Heart left ventricle (tissue), 16 donors: ENCODE measurements at regions of chr11 and their contacts with region 1.

Region 1: GRCh38 chr11:47616726-47617416 is 22.7 kb upstream of the C1QTNF4 start:
- DNase-seq: peak in 4 of 5 donors; percentile 46 to 66 (median 62)
- ATAC-seq: peak; percentile 49 to 85 (median 82)
- H3K4me3 ChIP-seq: no peak overlapping the region
- H3K27ac ChIP-seq: peak overlapping the region in 1 of 12 donors; percentile 4
- H3K4me1 ChIP-seq: peaks cover 0 to 12% (median 3%) of the 10 kb centered on the region in 12 donors
- H3K27me3 ChIP-seq: no peaks in the 10 kb centered on the region
- CTCF ChIP-seq: peak; percentile 19 to 85 (median 70)
- POLR2A ChIP-seq: no peak

Region 2: GRCh38 chr11:47466701-47467250 is 150.1 kb before region 1 on chr11:
- intact Hi-C with region 1: loop called in 3 of 10 experiments (anchors 10 kb)
- DNase-seq: peak in 4 of 5 donors; percentile 30 to 62 (median 56)
- ATAC-seq: peak; percentile 32 to 70 (median 63)
- H3K4me3 ChIP-seq: peak overlapping the region in 3 of 12 donors; percentile 5 to 28 (median 7)
- H3K27ac ChIP-seq: peak overlapping the region; percentile 41 to 79 (median 60)
- H3K4me1 ChIP-seq: peaks cover 3 to 49% (median 31%) of the 10 kb centered on the region in 12 donors
- H3K27me3 ChIP-seq: no peaks in the 10 kb centered on the region
- CTCF ChIP-seq: no peak
- POLR2A ChIP-seq: no peak

Region 3: GRCh38 chr11:47477323-47477722 is 139.5 kb before region 1 on chr11:
- intact Hi-C with region 1: loop called in 1 of 10 experiments (anchors 10 kb)
- DNase-seq: no peak
- ATAC-seq: peak in 1 of 4 donors; percentile 47
- H3K4me3 ChIP-seq: no peak overlapping the region
- H3K27ac ChIP-seq: no peak overlapping the region
- H3K4me1 ChIP-seq: peaks cover 0 to 26% (median 16%) of the 10 kb centered on the region in 12 donors
- H3K27me3 ChIP-seq: no peaks in the 10 kb centered on the region
- CTCF ChIP-seq: no peak
- POLR2A ChIP-seq: no peak

Region 4: GRCh38 chr11:47565340-47566148 is 51.3 kb before region 1 on chr11 and contains the start of gene PTPMT1:
- intact Hi-C with region 1: loop called in 1 of 10 experiments (anchors 5 kb)
- DNase-seq: peak; percentile 75 to 90 (median 85)
- ATAC-seq: peak; percentile 95 to 97 (median 96)
- H3K4me3 ChIP-seq: peak within 1 kb of the TSS; percentile 65 to 97 (median 90)
- H3K27ac ChIP-seq: peak within 1 kb of the TSS in 11 of 12 donors; percentile 41 to 92 (median 82)
- H3K4me1 ChIP-seq: peaks cover 0 to 23% (median 14%) of the 10 kb centered on the region in 12 donors
- H3K27me3 ChIP-seq: no peaks in the 10 kb centered on the region
- CTCF ChIP-seq: no peak
- POLR2A ChIP-seq: peak in 1 of 2 donors; percentile 51
- total RNA-seq, gene PTPMT1: 17.4 to 77.4 (median 22.7) TPM

Region 5: DNA sequence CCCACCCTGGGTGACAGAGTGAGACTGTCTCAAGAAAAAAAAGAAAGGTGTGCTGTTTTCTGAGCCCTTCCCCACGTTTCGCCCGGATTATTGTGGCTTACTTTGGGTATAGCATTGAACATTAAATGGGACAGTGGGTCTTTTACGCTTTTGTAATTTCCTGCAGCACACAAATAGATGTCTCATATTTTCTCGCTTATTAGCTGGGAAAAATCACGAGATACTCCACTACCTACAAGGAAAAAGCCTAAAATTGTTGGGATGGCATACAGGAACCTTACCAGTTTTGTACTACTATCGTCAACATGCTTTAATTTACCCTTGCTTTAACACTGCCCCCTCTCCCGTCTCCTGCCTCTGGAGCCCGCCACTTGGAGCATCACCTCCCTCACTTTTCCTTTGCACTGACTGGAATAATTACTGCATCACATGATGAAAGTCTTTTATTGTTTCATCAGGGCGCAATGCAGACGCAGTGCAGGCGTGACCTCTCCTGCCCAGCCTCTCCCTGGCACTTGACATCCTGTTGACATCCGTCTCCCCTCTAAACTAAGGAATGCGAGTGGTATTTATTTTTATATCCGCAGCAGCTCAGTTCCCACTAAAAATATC is 151.2 kb after region 1 on chr11:
- intact Hi-C with region 1: no loop called
- DNase-seq: peak; percentile 77 to 88 (median 83)
- ATAC-seq: peak; percentile 61 to 76 (median 66)
- H3K4me3 ChIP-seq: peak overlapping the region; percentile 33 to 99 (median 70)
- H3K27ac ChIP-seq: peak overlapping the region; percentile 97 to 100 (median 99)
- H3K4me1 ChIP-seq: peaks cover 0 to 42% (median 26%) of the 10 kb centered on the region in 12 donors
- H3K27me3 ChIP-seq: no peaks in the 10 kb centered on the region
- CTCF ChIP-seq: peak in 1 of 12 donors; percentile 18
- POLR2A ChIP-seq: peak; percentile 35 to 91